Lower lobe of right lung (tissue), 2 donors: ENCODE measurements at regions of chr11 and their contacts with region 1.

Region 1: GRCh38 chr11:65274735-65275682 is 13.2 kb downstream of the POLA2 start:
- DNase-seq: peak; percentile 62
- ATAC-seq: peak; percentile 91 to 93
- H3K4me3 ChIP-seq: no peak overlapping the region
- H3K27ac ChIP-seq: no peak overlapping the region
- H3K4me1 ChIP-seq: peaks cover 24% of the 10 kb centered on the region
- H3K27me3 ChIP-seq: no peaks in the 10 kb centered on the region
- CTCF ChIP-seq: peak; percentile 78

Region 2: DNA sequence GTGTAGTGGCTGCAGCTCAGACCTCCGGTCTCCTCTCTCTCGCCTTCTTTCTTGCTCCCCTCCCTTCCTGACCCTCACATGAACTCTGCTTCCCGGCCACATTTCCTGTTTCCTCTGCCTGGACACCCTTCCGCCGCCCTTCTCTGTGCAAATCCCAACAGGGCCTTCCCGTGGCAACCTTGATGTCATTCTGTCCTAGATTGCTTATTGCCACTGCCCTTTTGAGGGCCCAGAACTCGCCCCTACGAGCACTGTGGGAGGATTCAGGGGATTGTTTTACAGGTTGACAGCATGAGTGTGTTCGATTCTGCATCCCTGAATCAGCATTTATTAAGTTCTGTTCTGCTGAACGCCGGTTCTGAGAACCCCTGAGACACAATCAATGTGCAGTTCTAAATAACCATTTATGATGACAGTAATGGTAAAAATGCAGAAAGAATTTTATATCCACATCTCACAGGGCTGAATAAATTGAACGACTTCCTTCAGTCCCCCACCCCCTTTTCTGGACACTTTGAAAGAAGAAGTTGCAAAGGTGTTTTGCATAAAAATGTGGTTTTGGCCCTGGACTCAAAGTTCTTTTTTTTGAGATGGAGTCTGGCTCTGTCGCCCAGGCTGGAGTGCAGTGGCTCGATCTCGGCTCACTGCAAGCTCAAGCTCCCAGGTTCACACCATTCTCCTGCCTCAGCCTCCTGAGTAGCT is 284.6 kb before region 1 on chr11:
- intact Hi-C with region 1: no loop called
- DNase-seq: peak; percentile 58
- ATAC-seq: peak; percentile 66 to 70
- H3K4me3 ChIP-seq: peak overlapping the region; percentile 33
- H3K27ac ChIP-seq: peak overlapping the region; percentile 73
- H3K4me1 ChIP-seq: peaks cover 42% of the 10 kb centered on the region
- H3K27me3 ChIP-seq: no peaks in the 10 kb centered on the region
- CTCF ChIP-seq: no peak

Region 3: GRCh38 chr11:65314501-65315203 is 39.6 kb after region 1 on chr11 and contains the start of gene CDC42EP2:
- intact Hi-C with region 1: loop called (anchors 5 kb)
- DNase-seq: peak; percentile 92
- ATAC-seq: peak; percentile 96 to 97
- H3K4me3 ChIP-seq: peak within 1 kb of the TSS; percentile 100
- H3K27ac ChIP-seq: peak within 1 kb of the TSS; percentile 91
- H3K4me1 ChIP-seq: peaks cover 73% of the 10 kb centered on the region
- H3K27me3 ChIP-seq: no peaks in the 10 kb centered on the region
- CTCF ChIP-seq: no peak
- total RNA-seq, gene CDC42EP2: 17.0 TPM

Region 4: DNA sequence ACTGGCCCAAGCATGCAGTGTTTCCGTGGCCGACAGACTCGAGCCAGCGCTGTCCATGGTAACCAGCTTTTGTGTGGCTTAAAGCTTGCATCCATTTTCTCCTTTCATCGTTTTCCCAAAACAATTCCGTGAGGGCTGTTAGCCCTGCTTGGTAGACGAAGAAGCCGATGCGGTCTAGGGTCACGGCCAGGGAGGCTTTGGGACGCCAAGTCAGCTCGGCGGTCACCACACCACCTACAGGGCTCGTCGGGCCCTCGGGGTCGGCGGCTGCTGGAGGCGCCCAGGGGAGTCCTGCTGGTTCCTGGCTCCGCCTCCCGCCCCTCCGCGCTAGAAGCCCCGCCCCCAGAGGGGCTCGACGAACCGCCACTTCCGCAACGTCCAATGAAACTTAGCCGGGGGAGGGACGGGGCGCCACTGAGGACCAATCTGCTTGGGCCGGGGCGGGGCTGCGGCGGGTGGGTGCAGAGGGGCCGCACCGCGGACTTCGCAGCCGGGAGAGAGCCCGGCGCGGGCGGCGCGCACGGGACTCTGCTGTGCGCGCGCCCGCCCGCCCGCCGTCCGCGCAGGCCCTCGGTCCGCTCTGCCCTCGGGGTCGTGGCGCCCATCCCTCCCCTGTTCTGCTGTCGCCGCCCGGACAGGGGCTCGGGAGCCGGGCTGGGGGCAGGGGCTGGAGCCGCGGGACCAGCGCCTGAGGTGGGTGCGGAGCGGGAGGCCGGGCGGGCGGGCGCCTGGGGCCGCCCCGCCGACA is 79.4 kb after region 1 on chr11 and contains the start of gene TIGD3:
- intact Hi-C with region 1: no loop called
- DNase-seq: peak; percentile 97
- ATAC-seq: peak; percentile 96 to 97
- H3K4me3 ChIP-seq: peak within 1 kb of the TSS; percentile 73
- H3K27ac ChIP-seq: peak within 1 kb of the TSS; percentile 22
- H3K4me1 ChIP-seq: peaks cover 22% of the 10 kb centered on the region
- H3K27me3 ChIP-seq: peaks cover 13% of the 10 kb centered on the region
- CTCF ChIP-seq: no peak
- total RNA-seq, gene TIGD3: 0.18 TPM